ENCODE measurements at regions of chr10 and their contacts with region 1.

Region 1: DNA sequence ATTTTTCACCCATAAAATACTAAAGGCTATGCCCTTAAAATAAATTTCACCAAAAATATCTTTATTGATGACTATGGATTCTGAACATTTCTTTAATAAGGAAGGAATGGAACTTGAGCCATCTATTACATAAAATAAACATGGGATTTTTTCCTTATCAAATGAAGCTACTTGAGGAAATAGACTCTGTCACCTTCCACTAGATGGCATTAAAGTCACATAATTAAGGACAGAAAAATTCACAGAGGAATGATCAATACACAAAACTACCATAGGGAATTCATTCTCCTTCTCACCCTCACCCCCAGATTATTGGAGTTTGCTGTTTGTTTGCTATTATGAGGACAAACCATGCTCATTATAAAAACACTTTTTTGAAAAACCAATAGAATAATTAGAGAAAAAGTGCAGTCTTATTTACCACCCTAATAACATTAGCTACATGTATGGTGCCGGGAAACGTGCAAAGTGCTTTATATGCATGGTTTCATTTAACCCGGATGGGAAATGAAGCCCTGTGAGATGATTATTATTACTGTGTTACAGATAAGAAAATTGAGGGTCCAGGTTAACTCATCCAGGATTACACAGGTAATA is 21.1 kb upstream of the FOXI2 start:
- DNase-seq: peak; percentile 25
- H3K4me3 ChIP-seq: no peak overlapping the region
- H3K27ac ChIP-seq: no peak overlapping the region
- H3K4me1 ChIP-seq: no peaks in the 10 kb centered on the region
- H3K27me3 ChIP-seq: no peaks in the 10 kb centered on the region
- CTCF ChIP-seq: peak in 1 of 2 donors; percentile 7
- POLR2A ChIP-seq: no peak

Region 2: GRCh38 chr10:127702271-127702670 is 13.6 kb before region 1 on chr10:
- CTCF ChIA-PET with region 1: interaction called, 11 read pairs
- POLR2A ChIA-PET with region 1: no interaction called
- dilution Hi-C with region 1: no loop called
- intact Hi-C with region 1: no loop called
- DNase-seq: no peak
- H3K4me3 ChIP-seq: no peak overlapping the region
- H3K27ac ChIP-seq: no peak overlapping the region
- H3K4me1 ChIP-seq: no peaks in the 10 kb centered on the region
- H3K27me3 ChIP-seq: no peaks in the 10 kb centered on the region
- CTCF ChIP-seq: no peak
- POLR2A ChIP-seq: no peak

Region 3: DNA sequence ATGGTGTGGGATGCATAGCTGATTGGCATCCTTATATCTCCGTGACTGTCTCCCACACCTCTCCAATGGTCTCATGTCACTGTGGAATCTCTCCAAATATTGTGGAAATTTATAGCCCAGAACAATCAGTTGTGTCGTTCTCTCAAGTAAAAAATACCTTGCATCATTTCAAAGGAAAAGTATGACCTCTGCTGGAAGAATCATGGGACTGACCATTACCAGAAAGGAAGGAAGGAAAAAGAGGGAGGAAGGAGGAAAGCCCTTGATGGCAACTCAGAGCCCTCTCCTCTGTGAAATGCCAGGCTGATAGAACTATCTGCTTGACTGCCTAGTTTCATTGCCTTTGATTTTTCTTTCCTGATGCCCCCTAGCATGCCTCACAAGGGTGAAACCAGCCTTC is 97.4 kb after region 1 on chr10:
- CTCF ChIA-PET with region 1: interaction called, 14 read pairs
- POLR2A ChIA-PET with region 1: no interaction called
- dilution Hi-C with region 1: no loop called
- intact Hi-C with region 1: no loop called
- DNase-seq: peak; percentile 18
- H3K4me3 ChIP-seq: no peak overlapping the region
- H3K27ac ChIP-seq: no peak overlapping the region
- H3K4me1 ChIP-seq: no peaks in the 10 kb centered on the region
- H3K27me3 ChIP-seq: no peaks in the 10 kb centered on the region
- CTCF ChIP-seq: no peak
- POLR2A ChIP-seq: no peak

Region 4: DNA sequence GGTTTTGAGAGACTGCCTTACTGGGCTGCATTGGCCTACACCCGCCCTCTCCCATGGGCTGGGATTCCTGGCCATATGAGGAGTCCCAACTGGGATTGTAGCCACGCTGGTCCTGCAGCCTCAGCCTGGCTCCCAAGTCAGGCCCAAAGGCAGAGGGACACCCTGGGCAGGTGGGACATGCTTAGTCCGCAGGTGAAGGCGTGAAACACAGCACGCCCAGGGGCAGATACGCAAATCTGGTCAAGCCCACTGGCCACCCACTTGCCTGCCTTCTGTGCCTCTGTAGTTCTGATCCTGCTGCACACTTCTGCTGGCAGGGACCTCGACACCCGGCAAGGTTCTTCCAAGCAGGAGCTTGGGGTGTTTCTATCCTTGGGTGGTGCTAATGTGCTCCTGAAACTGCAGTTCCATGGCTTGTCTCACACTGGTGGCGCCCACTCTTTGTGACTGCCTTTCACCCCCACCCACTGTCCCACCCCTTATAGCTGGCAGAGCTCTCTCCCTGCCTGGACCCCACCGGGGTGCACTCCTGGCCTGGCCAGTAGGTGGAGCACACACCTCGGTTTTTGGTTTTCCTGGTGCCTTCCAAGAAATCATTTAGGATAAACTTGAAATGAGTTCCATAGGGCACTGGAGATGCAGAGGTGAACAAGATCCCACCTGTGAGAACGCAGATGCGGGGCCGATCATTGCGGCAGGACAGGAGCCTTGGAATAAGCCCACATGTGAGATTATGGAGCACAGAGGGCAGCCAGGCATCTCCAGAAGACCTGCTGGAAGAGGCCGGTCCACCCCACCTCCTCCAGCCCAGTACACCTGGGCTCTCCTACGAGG is 362.5 kb after region 1 on chr10:
- CTCF ChIA-PET with region 1: no interaction called
- POLR2A ChIA-PET with region 1: no interaction called
- dilution Hi-C with region 1: no loop called
- intact Hi-C with region 1: loop called (anchors 5 kb)
- DNase-seq: peak; percentile 39
- H3K4me3 ChIP-seq: no peak overlapping the region
- H3K27ac ChIP-seq: no peak overlapping the region
- H3K4me1 ChIP-seq: peaks cover 1% of the 10 kb centered on the region
- H3K27me3 ChIP-seq: no peaks in the 10 kb centered on the region
- CTCF ChIP-seq: peak; percentile 51 to 75
- POLR2A ChIP-seq: no peak